Body of pancreas (tissue), 4 donors: ENCODE measurements at regions of chr20 and their contacts with region 1.

Region 1: GRCh38 chr20:2643708-2644107 is 8.7 kb upstream of the NOP56 start:
- DNase-seq: no peak
- ATAC-seq: no peak
- H3K4me3 ChIP-seq: no peak overlapping the region
- H3K27ac ChIP-seq: no peak overlapping the region
- H3K4me1 ChIP-seq: no peaks in the 10 kb centered on the region
- H3K27me3 ChIP-seq: no peaks in the 10 kb centered on the region
- CTCF ChIP-seq: no peak
- POLR2A ChIP-seq: no peak

Region 2: GRCh38 chr20:2523919-2524708 is 119.6 kb before region 1 on chr20:
- intact Hi-C with region 1: loop called (anchors 10 kb)
- DNase-seq: peak; percentile 82 to 87 (median 86)
- ATAC-seq: peak; percentile 82
- H3K4me3 ChIP-seq: peak overlapping the region; percentile 24 to 70
- H3K27ac ChIP-seq: peak overlapping the region in 3 of 4 donors; percentile 57 to 85 (median 65)
- H3K4me1 ChIP-seq: peaks cover 16% of the 10 kb centered on the region
- H3K27me3 ChIP-seq: no peaks in the 10 kb centered on the region
- CTCF ChIP-seq: peak; percentile 87 to 95 (median 90)
- POLR2A ChIP-seq: peak in 2 of 3 donors; percentile 72 to 75

Region 3: DNA sequence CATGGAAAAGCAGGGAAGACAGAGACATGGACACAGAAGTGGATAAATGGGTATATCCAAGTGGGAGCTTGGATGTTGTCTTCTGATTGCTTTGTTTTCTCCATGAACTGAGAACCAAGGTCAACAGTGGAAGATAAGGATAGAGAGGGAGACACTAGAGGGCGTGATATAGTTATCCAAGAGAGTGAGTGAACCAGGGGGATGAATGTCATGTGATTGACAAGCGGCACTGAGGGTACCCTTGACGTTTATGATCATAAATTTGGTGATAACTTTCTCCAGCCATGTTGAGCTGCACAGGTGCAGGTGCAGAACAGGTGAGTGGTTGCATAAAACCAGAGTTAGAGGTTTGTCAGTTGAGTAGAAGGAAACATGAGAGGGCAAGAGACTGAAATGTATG is 69.6 kb after region 1 on chr20:
- intact Hi-C with region 1: no loop called
- DNase-seq: no peak
- ATAC-seq: no peak
- H3K4me3 ChIP-seq: no peak overlapping the region
- H3K27ac ChIP-seq: no peak overlapping the region
- H3K4me1 ChIP-seq: no peaks in the 10 kb centered on the region
- H3K27me3 ChIP-seq: no peaks in the 10 kb centered on the region
- CTCF ChIP-seq: peak in 3 of 7 experiments; percentile 6 to 12 (median 7)
- POLR2A ChIP-seq: no peak